T-cell (primary cell): ENCODE measurements at regions of chr17 and their contacts with region 1.

Region 1: DNA sequence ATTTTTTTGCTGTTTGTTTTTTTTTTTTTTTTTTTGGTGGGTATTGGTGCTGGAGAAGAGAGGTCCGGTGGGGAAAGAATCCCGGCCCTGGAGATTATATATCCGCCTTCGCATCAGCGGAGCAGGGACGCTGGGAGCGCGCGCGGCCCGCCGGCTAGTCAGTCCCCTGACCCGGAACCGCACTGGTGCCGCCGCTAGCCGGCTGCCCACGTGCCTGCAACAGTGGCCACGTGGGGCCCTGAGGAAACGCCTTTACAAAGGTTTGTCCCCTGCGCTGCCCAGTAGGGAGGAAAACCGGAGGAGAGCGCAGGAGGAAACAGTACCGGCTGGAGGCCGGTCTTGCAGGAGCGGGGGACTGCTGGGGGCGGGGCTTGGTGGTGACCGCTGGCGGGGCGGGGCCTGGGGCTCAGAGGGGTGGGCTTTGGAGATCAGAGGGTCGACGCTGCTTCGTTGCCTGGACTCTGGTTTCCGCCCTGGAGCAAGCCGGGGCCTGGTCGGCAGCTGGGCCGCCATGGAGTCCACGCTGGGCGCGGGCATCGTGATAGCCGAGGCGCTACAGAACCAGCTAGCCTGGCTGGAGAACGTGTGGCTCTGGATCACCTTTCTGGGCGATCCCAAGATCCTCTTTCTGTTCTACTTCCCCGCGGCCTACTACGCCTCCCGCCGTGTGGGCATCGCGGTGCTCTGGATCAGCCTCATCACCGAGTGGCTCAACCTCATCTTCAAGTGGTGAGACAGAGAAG is at the start of gene G6PC3:
- DNase-seq: peak in 34 of 35 experiments; percentile 17 to 79 (median 46)
- ATAC-seq: peak; percentile 54 to 64 (median 58)
- H3K4me3 ChIP-seq: peak within 1 kb of the TSS; percentile 66 to 74
- H3K4me3 Mint-ChIP-seq: peak within 1 kb of the TSS; percentile 93 to 97 (median 96)
- H3K27ac ChIP-seq: peak within 1 kb of the TSS; percentile 78
- H3K27ac Mint-ChIP-seq: peak within 1 kb of the TSS; percentile 91 to 94
- H3K4me1 ChIP-seq: peaks cover 10 to 31% of the 10 kb centered on the region in 2 experiments
- H3K4me1 Mint-ChIP-seq: peaks cover 41 to 52% (median 43%) of the 10 kb centered on the region in 3 donors
- H3K27me3 ChIP-seq: no peaks in the 10 kb centered on the region
- H3K27me3 Mint-ChIP-seq: no peaks in the 10 kb centered on the region
- total RNA-seq, gene G6PC3: 9.4 to 19.0 (median 16.2) TPM

Region 2: DNA sequence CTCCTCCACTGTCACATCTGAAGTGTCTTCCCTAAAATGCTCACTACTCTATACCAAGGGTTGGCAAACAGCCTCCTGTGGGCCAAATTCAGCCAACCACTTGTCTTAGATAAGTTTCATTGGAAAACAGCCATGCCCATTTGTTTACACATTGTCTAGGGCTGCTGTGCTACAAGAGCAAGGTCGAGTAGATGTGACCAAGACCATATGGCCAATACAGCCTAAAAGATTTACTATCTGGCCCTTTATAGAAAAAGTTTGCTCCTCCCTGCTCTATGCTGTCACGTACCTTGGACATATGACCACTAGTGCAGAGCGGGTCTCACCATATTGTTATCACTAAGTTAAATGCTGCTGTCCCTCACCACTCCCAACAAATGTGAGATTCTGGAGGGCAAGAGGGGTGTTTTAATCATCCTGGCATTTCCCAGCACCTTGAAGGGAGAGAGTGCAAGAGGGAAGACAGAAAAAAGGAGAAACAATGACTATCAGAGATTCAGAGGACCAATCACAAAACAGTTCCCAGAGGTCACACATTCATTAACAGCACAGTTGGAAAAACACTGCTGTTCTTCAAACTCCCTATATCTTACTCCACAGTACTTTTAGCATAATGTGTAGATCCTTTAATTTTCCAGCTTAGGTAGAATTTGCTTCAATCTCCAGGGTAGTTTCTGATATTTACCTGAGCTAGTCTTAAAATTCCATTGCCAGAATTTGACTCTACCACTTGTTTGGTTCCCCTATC is 17.3 kb before region 1 on chr17:
- CTCF ChIA-PET with region 1: no interaction called
- POLR2A ChIA-PET with region 1: no interaction called
- DNase-seq: no peak
- ATAC-seq: no peak
- H3K4me3 ChIP-seq: no peak overlapping the region
- H3K4me3 Mint-ChIP-seq: no peak overlapping the region
- H3K27ac ChIP-seq: no peak overlapping the region
- H3K27ac Mint-ChIP-seq: peak overlapping the region in 1 of 2 donors; percentile 9
- H3K4me1 ChIP-seq: no peaks in the 10 kb centered on the region
- H3K4me1 Mint-ChIP-seq: peaks cover 20 to 24% (median 21%) of the 10 kb centered on the region in 3 donors
- H3K27me3 ChIP-seq: no peaks in the 10 kb centered on the region
- H3K27me3 Mint-ChIP-seq: no peaks in the 10 kb centered on the region

Region 3: GRCh38 chr17:44672479-44673093 is 602.0 kb after region 1 on chr17:
- CTCF ChIA-PET with region 1: no interaction called
- POLR2A ChIA-PET with region 1: interaction called in 1 of 2 experiments, 10 read pairs
- DNase-seq: no peak
- ATAC-seq: no peak
- H3K4me3 ChIP-seq: no peak overlapping the region
- H3K4me3 Mint-ChIP-seq: no peak overlapping the region
- H3K27ac ChIP-seq: no peak overlapping the region
- H3K27ac Mint-ChIP-seq: no peak overlapping the region
- H3K4me1 ChIP-seq: no peaks in the 10 kb centered on the region
- H3K4me1 Mint-ChIP-seq: no peaks in the 10 kb centered on the region
- H3K27me3 ChIP-seq: no peaks in the 10 kb centered on the region
- H3K27me3 Mint-ChIP-seq: peaks cover 0 to 2% of the 10 kb centered on the region in 2 donors